AG04449 (cell line): ENCODE measurements at regions of chr1 and their contacts with region 1.

Region 1: DNA sequence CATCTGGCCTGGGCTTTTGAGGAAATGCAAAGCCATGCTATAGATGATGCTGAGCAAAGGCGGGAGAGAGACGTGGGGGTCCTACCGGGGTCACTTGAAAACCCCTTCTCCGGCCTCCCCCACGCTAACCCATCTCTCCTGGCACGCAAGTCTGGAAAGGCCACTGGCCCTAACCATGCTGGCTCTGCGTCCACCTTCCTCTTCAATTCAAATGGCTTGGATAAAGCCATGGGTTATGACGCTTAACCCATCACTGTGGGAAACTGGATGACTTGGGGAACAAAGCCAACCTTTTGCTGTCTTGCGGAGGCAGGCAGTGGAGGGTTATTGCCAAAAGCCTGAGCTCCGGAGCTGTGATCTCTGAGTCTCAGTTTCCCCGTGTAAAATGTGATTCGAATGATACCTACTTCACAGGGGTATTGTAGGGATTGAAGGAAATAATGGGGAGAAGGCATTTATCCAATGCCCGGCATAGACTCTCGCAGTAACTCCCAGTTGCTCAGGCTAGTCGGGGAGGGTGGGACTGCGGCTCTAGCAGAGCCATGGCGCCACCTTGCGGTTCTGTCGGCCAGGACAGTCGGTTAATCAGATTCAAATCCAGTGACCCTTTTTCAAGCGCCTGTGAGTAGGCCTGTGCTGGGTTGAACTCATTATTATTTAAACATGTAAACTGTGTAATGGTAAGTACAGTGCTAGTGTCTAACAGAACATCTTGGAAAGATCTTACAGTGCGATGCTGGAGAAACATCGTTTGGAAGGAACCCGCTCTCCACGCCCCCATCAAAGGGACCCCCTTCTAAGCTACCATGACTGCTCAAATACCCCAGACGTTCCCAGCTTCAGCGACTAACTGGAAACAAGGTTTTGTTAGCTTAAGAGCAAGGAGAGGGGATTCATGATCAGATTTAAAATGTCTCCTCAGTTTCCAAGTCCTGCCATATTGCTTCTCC is 20.3 kb downstream of the NEK2 start:
- DNase-seq: no peak
- H3K4me3 ChIP-seq: no peak overlapping the region
- CTCF ChIP-seq: peak; percentile 90

Region 2: DNA sequence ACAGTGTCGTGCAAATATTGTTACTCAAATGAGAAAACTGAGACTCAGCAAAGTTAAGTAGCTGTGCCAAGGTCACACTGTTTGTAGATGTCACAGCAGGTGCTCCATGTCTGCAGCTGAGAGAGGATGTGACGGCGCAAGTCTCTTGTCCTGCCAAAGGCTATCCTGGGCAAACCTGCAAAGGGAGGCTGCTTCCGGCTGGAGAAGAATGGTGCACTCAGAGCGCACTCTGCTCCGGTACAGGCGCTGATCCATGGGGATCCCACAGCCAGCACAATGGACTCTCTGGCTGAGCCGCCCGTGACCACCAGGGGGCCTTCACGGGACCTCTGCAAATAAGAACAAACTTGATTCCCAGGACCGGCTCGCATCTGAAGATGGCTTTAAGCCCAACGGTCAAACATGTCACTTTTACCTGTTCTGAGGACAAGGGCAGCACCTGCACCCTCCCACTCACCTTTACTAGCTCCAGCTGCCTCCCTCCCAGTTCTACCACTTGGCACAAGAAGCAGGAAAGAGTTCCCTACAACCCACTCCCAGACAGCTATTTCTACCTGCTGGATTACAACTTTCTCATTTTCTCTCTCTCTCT is 185.1 kb before region 1 on chr1:
- CTCF ChIA-PET with region 1: interaction called, 50 read pairs
- POLR2A ChIA-PET with region 1: no interaction called
- DNase-seq: no peak
- H3K4me3 ChIP-seq: no peak overlapping the region
- CTCF ChIP-seq: peak; percentile 91

Region 3: DNA sequence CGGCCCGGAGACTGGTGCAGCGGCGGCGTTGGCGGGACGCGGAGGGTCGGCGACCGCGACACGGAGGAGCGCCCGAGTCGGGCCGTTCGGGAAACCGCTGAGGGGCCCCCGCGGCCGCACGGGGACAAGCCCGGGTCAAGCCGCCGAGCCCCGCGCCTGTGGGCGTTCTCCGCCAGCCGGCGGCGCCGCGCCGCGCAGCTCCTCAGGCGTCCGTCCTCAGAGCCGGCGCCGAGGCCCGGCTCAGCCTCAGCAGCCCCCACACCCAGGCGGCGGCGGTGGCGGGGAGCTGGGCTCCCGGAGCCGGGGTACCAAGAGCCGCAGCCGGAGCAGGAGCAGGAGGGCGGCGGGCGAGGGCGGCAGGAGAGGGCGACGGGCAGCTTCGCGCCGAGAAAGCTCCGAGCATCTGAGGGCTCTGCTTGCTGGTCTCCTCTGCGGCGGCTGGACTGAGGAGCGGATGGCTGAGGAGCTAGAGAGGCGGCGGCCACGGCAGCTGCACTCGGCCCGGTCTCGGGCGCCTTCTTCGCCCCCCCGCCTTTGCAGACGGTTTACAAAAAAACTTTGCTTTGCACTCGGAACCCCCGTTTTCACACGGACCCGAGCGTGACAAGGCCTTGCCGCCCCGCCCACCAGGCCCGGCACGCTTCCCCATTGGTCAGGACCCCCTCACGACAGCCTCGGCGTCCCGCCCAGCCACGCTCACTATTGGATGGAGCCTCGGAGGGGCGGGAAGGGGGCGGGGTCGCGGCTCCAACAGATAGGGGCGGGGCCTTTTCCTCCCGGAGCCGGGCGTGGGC is 76.3 kb before region 1 on chr1 and contains the start of gene SLC30A1:
- CTCF ChIA-PET with region 1: interaction called, 24 read pairs
- POLR2A ChIA-PET with region 1: interaction called, 6 read pairs
- DNase-seq: peak; percentile 86
- H3K4me3 ChIP-seq: peak within 1 kb of the TSS; percentile 93
- CTCF ChIP-seq: no peak

Region 4: GRCh38 chr1:211643324-211644212 is 11.5 kb before region 1 on chr1:
- CTCF ChIA-PET with region 1: interaction called, 81 read pairs
- POLR2A ChIA-PET with region 1: no interaction called
- DNase-seq: no peak
- H3K4me3 ChIP-seq: no peak overlapping the region
- CTCF ChIP-seq: no peak

Region 5: GRCh38 chr1:211667065-211667617 is 12.0 kb after region 1 on chr1:
- CTCF ChIA-PET with region 1: interaction called, 16 read pairs
- POLR2A ChIA-PET with region 1: no interaction called
- DNase-seq: no peak
- H3K4me3 ChIP-seq: no peak overlapping the region
- CTCF ChIP-seq: no peak

Region 6: GRCh38 chr1:211675230-211676105 is 20.4 kb after region 1 on chr1 and contains the start of gene NEK2:
- CTCF ChIA-PET with region 1: interaction called, 14 read pairs
- POLR2A ChIA-PET with region 1: no interaction called
- DNase-seq: no peak
- H3K4me3 ChIP-seq: peak within 1 kb of the TSS; percentile 77
- CTCF ChIP-seq: no peak

Region 7: DNA sequence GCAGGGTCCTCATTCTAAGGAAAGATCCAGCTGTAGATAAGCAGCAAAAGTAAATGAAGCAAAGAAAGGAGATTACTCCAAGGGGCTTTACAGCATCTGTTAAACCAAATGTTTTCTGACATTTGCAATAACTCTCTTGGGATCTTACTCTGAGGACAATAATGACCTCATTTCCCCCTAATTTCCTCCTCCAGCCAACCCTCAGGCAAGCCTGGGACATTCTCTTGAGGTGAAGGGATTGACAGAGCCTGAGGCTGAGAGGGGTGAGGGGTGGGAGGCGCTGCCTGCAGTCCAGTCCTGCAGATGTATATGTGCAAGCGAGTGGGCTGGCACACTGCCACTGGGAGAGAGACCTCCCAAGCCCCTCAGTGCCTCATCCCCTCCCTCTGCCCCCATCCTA is 60.9 kb after region 1 on chr1:
- CTCF ChIA-PET with region 1: no interaction called
- POLR2A ChIA-PET with region 1: no interaction called
- DNase-seq: no peak
- H3K4me3 ChIP-seq: no peak overlapping the region
- CTCF ChIP-seq: no peak

Region 8: GRCh38 chr1:212498283-212499040 is 843.3 kb after region 1 on chr1:
- CTCF ChIA-PET with region 1: no interaction called
- POLR2A ChIA-PET with region 1: no interaction called
- DNase-seq: peak; percentile 66
- H3K4me3 ChIP-seq: no peak overlapping the region
- CTCF ChIP-seq: no peak